CD8-positive, alpha-beta memory T cell (primary cell): ENCODE measurements at regions of chr16 and their contacts with region 1.

Region 1: DNA sequence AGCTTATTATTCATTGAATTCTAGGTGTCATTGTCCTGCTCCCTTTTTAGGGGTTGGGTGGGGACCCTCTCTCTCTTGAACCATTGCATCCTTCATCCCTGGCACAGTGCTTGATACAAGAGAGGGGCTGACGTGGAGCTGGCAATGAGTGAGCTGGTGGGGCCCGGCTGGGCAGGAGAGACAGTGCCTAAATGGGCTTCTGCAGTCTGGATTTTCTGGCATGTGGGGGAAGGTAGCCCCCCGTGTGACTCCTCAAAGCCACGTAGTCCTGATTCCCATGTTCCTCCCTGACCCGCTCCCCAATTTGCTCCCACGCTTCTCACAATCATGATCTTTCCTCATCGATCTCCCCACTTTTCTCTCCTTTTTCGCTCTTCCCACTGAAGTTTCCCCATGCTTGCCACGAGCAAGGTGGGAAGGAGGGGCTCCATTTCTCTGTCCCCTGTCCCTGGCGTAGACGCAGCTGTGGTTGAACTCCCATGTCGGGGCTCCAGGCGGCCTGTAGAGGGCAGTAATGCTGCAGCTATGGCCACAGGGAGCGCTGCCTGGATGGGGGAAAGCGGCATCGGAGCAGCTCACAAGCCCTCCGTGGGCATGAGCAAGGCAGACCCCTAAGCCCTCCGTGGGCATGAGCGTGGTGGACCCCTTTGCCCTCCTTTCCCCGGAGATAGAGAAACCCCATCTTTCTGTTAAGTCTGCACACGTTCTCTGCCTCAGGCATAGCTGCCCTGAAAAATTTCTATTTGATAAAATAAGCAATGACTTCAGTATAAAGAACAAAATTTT is 47.5 kb downstream of the HAPSTR1 start:
- DNase-seq: peak; percentile 46 to 74 (median 54)
- H3K4me3 ChIP-seq: no peak overlapping the region
- H3K4me3 Mint-ChIP-seq: peak overlapping the region in 5 of 7 donors; percentile 7 to 51 (median 29)
- H3K27ac ChIP-seq: no peak overlapping the region
- H3K27ac Mint-ChIP-seq: peak overlapping the region in 2 of 8 donors; percentile 88 to 92
- H3K4me1 ChIP-seq: peaks cover 13% of the 10 kb centered on the region
- H3K4me1 Mint-ChIP-seq: peaks cover 26 to 34% (median 27%) of the 10 kb centered on the region in 3 donors
- H3K27me3 ChIP-seq: peaks cover 4% of the 10 kb centered on the region
- H3K27me3 Mint-ChIP-seq: peaks cover 0 to 9% of the 10 kb centered on the region in 2 donors

Region 2: DNA sequence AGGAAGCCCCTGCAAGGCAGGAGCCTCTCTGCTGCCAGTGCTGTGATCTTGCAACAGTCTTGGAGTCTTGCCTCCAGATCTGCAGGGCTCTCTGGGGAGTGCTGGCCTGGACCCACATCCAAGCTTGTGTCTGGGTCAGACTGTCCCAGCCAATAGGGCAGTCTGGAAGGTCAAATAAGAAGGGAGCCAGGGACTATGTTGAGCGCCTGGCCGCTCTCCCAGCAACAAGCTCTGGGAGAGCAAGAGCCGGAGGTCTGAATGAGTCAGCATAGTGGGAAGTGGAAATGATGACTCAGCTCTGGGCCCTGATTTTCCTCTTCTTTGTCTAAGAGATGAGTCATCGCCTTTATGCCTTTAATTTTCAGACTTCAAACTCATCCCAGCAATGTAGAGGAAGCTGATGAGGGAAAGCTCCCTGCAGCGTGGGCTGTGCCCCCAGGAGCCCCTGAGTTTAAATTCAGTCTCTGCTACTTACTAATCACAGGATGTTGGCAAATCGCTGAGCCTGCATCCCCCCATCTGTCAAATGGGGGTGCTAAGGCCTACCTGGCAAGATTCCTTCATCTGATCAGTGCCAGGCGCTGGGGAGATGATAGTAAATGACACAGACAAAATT is 91.1 kb before region 1 on chr16:
- CTCF ChIA-PET with region 1: no interaction called
- POLR2A ChIA-PET with region 1: no interaction called
- DNase-seq: no peak
- H3K4me3 ChIP-seq: no peak overlapping the region
- H3K4me3 Mint-ChIP-seq: no peak overlapping the region
- H3K27ac ChIP-seq: no peak overlapping the region
- H3K27ac Mint-ChIP-seq: no peak overlapping the region
- H3K4me1 ChIP-seq: no peaks in the 10 kb centered on the region
- H3K4me1 Mint-ChIP-seq: peaks cover 3 to 9% (median 6%) of the 10 kb centered on the region in 3 donors
- H3K27me3 ChIP-seq: no peaks in the 10 kb centered on the region
- H3K27me3 Mint-ChIP-seq: peaks cover 2 to 4% of the 10 kb centered on the region in 2 donors

Region 3: GRCh38 chr16:9124908-9125584 is 13.9 kb before region 1 on chr16:
- CTCF ChIA-PET with region 1: interaction called, 10 read pairs
- POLR2A ChIA-PET with region 1: no interaction called
- DNase-seq: no peak
- H3K4me3 ChIP-seq: no peak overlapping the region
- H3K4me3 Mint-ChIP-seq: peak overlapping the region in 1 of 7 donors; percentile 59
- H3K27ac ChIP-seq: no peak overlapping the region
- H3K27ac Mint-ChIP-seq: peak overlapping the region; percentile 24 to 88 (median 78)
- H3K4me1 ChIP-seq: peaks cover 26% of the 10 kb centered on the region
- H3K4me1 Mint-ChIP-seq: peaks cover 46 to 78% (median 63%) of the 10 kb centered on the region in 3 donors
- H3K27me3 ChIP-seq: no peaks in the 10 kb centered on the region
- H3K27me3 Mint-ChIP-seq: no peaks in the 10 kb centered on the region

Region 4: GRCh38 chr16:9192746-9193145 is 53.8 kb after region 1 on chr16:
- CTCF ChIA-PET with region 1: no interaction called
- POLR2A ChIA-PET with region 1: no interaction called
- DNase-seq: no peak
- H3K4me3 ChIP-seq: no peak overlapping the region
- H3K4me3 Mint-ChIP-seq: no peak overlapping the region
- H3K27ac ChIP-seq: no peak overlapping the region
- H3K27ac Mint-ChIP-seq: no peak overlapping the region
- H3K4me1 ChIP-seq: no peaks in the 10 kb centered on the region
- H3K4me1 Mint-ChIP-seq: no peaks in the 10 kb centered on the region
- H3K27me3 ChIP-seq: no peaks in the 10 kb centered on the region
- H3K27me3 Mint-ChIP-seq: peaks cover 7 to 9% of the 10 kb centered on the region in 2 donors

Region 5: GRCh38 chr16:9275377-9275776 is 136.5 kb after region 1 on chr16:
- CTCF ChIA-PET with region 1: no interaction called
- POLR2A ChIA-PET with region 1: no interaction called
- DNase-seq: no peak
- H3K4me3 ChIP-seq: no peak overlapping the region
- H3K4me3 Mint-ChIP-seq: no peak overlapping the region
- H3K27ac ChIP-seq: no peak overlapping the region
- H3K27ac Mint-ChIP-seq: no peak overlapping the region
- H3K4me1 ChIP-seq: no peaks in the 10 kb centered on the region
- H3K4me1 Mint-ChIP-seq: no peaks in the 10 kb centered on the region
- H3K27me3 ChIP-seq: no peaks in the 10 kb centered on the region
- H3K27me3 Mint-ChIP-seq: peaks cover 1 to 13% of the 10 kb centered on the region in 2 donors